GM12878 (cell line): ENCODE measurements at regions of chr12 and their contacts with region 1.

Region 1: DNA sequence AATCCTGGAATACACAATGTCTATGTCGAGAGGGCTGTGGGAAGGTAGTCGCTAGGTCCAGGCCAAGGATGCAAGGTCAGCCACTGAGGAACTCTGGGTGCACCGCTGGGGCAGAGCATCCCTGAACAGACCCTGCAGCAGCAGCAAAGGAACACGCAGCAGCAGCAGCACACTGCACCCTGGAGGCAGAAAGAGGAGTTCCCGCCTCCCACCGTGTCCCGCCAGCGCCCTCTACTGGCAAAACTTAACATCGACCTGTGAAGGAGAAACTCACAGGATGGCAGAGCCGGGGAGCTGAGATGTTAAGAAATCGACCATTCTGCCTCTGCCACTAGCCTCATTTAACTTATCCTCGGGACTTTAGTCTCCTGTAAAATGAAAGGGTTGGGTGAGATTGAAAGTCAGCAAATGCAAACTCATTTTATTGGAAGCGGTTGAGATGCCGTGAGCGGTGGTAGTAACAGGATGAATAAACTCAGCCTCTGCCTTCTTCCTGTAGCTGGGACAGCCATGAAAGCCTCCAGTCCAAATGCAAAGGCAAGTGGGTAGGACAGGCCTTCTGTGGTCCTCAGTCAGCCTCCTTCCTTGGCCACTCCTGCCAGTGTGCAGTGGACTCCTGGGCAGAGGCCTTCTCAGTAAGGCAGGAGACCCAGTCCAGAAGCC is 45.6 kb downstream of the STAB2 start:
- DNase-seq: peak; percentile 31
- ATAC-seq: peak; percentile 98
- H3K4me3 ChIP-seq: no peak overlapping the region
- H3K27ac ChIP-seq: no peak overlapping the region
- H3K4me1 ChIP-seq: no peaks in the 10 kb centered on the region
- H3K27me3 ChIP-seq: no peaks in the 10 kb centered on the region; a peak in 1 of 4 replicates
- CTCF ChIP-seq: peak; percentile 100; a peak in 5 of 6 replicates
- EP300 ChIP-seq: no peak
- POLR2A ChIP-seq: no peak
- RAD21 ChIP-seq: peak; percentile 95

Region 2: DNA sequence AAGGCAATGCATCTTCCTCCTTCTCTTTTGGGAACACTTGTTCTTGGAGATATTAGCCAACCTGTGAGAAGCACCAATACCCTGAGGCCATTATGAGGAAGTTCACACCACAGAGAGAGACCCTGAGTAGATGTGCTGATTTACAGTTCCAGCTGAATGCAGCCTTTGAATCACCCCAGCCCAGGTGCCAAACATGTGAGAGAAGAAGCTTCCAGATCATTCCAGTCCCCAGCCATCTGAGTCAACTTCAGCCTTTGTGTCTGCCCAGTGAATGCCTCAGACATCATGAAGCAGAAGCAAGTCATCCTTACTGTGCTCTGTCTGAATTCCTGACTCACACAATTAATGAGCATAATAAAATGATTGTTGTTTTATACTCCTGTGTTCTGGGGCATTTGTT is 162.0 kb before region 1 on chr12:
- CTCF ChIA-PET with region 1: no interaction called
- POLR2A ChIA-PET with region 1: no interaction called
- RAD21 ChIA-PET with region 1: no interaction called
- SMC1A ChIA-PET with region 1: no interaction called
- in situ Hi-C with region 1: no loop called
- intact Hi-C with region 1: no loop called
- DNase-seq: no peak
- ATAC-seq: peak; percentile 48
- H3K4me3 ChIP-seq: no peak overlapping the region
- H3K27ac ChIP-seq: no peak overlapping the region
- H3K4me1 ChIP-seq: peaks cover 11% of the 10 kb centered on the region
- H3K27me3 ChIP-seq: no peaks in the 10 kb centered on the region
- CTCF ChIP-seq: no peak
- EP300 ChIP-seq: peak in 1 of 2 experiments; percentile 7; a peak in 1 of 4 replicates
- POLR2A ChIP-seq: no peak
- RAD21 ChIP-seq: no peak

Region 3: GRCh38 chr12:103571286-103571685 is 61.4 kb before region 1 on chr12:
- CTCF ChIA-PET with region 1: interaction called, 84 read pairs
- POLR2A ChIA-PET with region 1: no interaction called
- RAD21 ChIA-PET with region 1: interaction called, 5 read pairs
- SMC1A ChIA-PET with region 1: interaction called, 24 read pairs
- in situ Hi-C with region 1: no loop called
- intact Hi-C with region 1: loop called (anchors 1 kb)
- DNase-seq: no peak
- ATAC-seq: no peak
- H3K4me3 ChIP-seq: no peak overlapping the region
- H3K27ac ChIP-seq: no peak overlapping the region
- H3K4me1 ChIP-seq: peaks cover 5% of the 10 kb centered on the region
- H3K27me3 ChIP-seq: no peaks in the 10 kb centered on the region; a peak in 1 of 4 replicates
- CTCF ChIP-seq: no peak
- EP300 ChIP-seq: no peak
- POLR2A ChIP-seq: no peak
- RAD21 ChIP-seq: no peak

Region 4: GRCh38 chr12:103580026-103580425 is 52.7 kb before region 1 on chr12:
- CTCF ChIA-PET with region 1: interaction called, 84 read pairs
- POLR2A ChIA-PET with region 1: no interaction called
- RAD21 ChIA-PET with region 1: interaction called, 5 read pairs
- SMC1A ChIA-PET with region 1: interaction called, 24 read pairs
- in situ Hi-C with region 1: loop called (anchors 5 kb)
- intact Hi-C with region 1: loop called (anchors 1 kb)
- DNase-seq: no peak
- ATAC-seq: no peak
- H3K4me3 ChIP-seq: no peak overlapping the region
- H3K27ac ChIP-seq: no peak overlapping the region
- H3K4me1 ChIP-seq: peaks cover 5% of the 10 kb centered on the region
- H3K27me3 ChIP-seq: no peaks in the 10 kb centered on the region
- CTCF ChIP-seq: no peak
- EP300 ChIP-seq: no peak
- POLR2A ChIP-seq: no peak
- RAD21 ChIP-seq: no peak

Region 5: GRCh38 chr12:103586132-103586531 is 46.6 kb before region 1 on chr12:
- CTCF ChIA-PET with region 1: interaction called, 36 read pairs
- POLR2A ChIA-PET with region 1: no interaction called
- RAD21 ChIA-PET with region 1: interaction called, 5 read pairs
- SMC1A ChIA-PET with region 1: interaction called, 3 read pairs
- in situ Hi-C with region 1: loop called (anchors 5 kb)
- intact Hi-C with region 1: no loop called
- DNase-seq: no peak
- ATAC-seq: no peak
- H3K4me3 ChIP-seq: no peak overlapping the region
- H3K27ac ChIP-seq: no peak overlapping the region
- H3K4me1 ChIP-seq: peaks cover 21% of the 10 kb centered on the region
- H3K27me3 ChIP-seq: no peaks in the 10 kb centered on the region
- CTCF ChIP-seq: peak in 1 of 3 experiments; percentile 17; a peak in 1 of 6 replicates
- EP300 ChIP-seq: no peak
- POLR2A ChIP-seq: no peak
- RAD21 ChIP-seq: peak; percentile 66

Region 6: DNA sequence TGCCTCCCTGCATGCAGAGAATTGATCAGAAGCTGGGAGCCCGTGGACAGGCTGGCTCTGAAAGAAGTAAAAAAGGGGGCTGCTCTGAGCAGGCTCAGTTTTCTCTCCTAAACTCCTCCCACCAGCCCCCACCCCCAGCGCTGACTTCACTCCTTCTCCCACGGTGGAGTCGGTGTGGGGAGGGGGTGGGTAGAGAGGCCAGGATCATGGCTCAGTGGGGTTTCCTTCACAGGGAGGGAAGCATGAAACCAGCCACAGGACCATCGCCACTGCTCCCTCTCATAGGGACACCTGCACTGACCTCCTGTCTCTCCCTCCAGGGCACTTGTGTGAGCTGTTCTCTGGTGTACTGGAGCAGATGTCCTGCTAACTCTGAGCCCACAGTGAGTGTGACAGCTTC is 33.3 kb after region 1 on chr12:
- CTCF ChIA-PET with region 1: interaction called, 12 read pairs
- POLR2A ChIA-PET with region 1: no interaction called
- RAD21 ChIA-PET with region 1: no interaction called
- SMC1A ChIA-PET with region 1: no interaction called
- in situ Hi-C with region 1: no loop called
- intact Hi-C with region 1: no loop called
- DNase-seq: no peak
- ATAC-seq: no peak
- H3K4me3 ChIP-seq: no peak overlapping the region
- H3K27ac ChIP-seq: no peak overlapping the region
- H3K4me1 ChIP-seq: no peaks in the 10 kb centered on the region
- H3K27me3 ChIP-seq: no peaks in the 10 kb centered on the region; a peak in 1 of 4 replicates
- CTCF ChIP-seq: no peak
- EP300 ChIP-seq: no peak
- POLR2A ChIP-seq: no peak
- RAD21 ChIP-seq: no peak